ENCODE measurements at regions of chr11 and their contacts with region 1.

Region 1: DNA sequence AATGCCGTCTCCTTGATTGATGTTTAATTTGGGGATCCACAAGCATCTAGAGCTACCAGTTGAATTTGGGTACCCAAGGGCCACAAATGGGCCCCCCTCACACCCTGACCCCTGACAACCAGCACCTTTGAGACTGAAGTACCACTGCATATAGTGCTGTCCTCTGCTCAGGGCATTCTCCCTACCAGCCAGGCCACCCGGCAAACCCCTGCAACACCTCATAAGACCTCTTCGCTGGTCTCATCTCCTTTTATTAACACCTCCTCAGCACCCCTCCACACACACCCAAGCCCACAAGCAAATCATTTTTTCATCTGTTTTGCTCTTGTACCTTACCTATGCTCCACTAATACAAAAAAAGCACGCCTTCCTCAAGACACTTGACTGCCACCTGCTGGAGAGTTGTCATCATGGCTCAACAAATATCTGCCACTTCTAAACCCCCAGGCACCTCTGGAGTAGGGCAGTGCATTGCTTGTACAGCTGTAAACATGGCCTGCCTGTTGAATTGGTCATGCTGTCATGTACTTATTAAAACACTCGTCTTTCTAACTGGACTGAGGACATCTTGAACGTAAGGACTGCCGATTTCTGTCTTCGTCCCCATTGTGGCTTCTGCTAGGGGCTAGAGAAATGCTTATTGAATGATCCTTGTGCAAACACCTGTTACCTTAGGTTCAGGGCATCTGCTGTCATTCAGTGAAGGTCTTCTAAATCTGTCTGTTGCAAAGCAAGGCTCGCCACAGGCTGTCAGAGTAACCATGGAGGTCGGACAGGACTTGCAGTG is 66.5 kb downstream of the BMAL1 start:
- DNase-seq: peak; percentile 74 to 80
- ATAC-seq: peak; percentile 44 to 68
- H3K4me3 ChIP-seq: no peak overlapping the region
- H3K27ac ChIP-seq: peak overlapping the region; percentile 39 to 98
- H3K4me1 ChIP-seq: peaks cover 48% of the 10 kb centered on the region
- CTCF ChIP-seq: peak; percentile 91
- EP300 ChIP-seq: no peak
- POLR2A ChIP-seq: no peak
- RAD21 ChIP-seq: peak; percentile 92 to 95

Region 2: GRCh38 chr11:13238879-13239514 is 105.1 kb before region 1 on chr11:
- CTCF ChIA-PET with region 1: interaction called, 12 read pairs
- POLR2A ChIA-PET with region 1: no interaction called
- DNase-seq: peak; percentile 55 to 57
- ATAC-seq: peak; percentile 59 to 95; a peak in 4 of 6 replicates
- H3K4me3 ChIP-seq: no peak overlapping the region
- H3K27ac ChIP-seq: peak overlapping the region in 1 of 2 experiments; percentile 14; a peak in 3 of 6 replicates
- H3K4me1 ChIP-seq: 0 out of 3 replicates have a peak, but pooled peaks cover 2% of the 10 kb centered on the region
- CTCF ChIP-seq: peak; percentile 77
- EP300 ChIP-seq: no peak
- POLR2A ChIP-seq: no peak
- RAD21 ChIP-seq: peak; percentile 71 to 78

Region 3: GRCh38 chr11:13261591-13262061 is 82.5 kb before region 1 on chr11:
- CTCF ChIA-PET with region 1: interaction called, 11 read pairs
- POLR2A ChIA-PET with region 1: no interaction called
- DNase-seq: peak; percentile 69 to 84
- ATAC-seq: peak; percentile 78 to 95
- H3K4me3 ChIP-seq: no peak overlapping the region
- H3K27ac ChIP-seq: peak overlapping the region; percentile 62 to 84
- H3K4me1 ChIP-seq: peaks cover 30% of the 10 kb centered on the region
- CTCF ChIP-seq: no peak
- EP300 ChIP-seq: no peak
- POLR2A ChIP-seq: no peak
- RAD21 ChIP-seq: no peak

Region 4: DNA sequence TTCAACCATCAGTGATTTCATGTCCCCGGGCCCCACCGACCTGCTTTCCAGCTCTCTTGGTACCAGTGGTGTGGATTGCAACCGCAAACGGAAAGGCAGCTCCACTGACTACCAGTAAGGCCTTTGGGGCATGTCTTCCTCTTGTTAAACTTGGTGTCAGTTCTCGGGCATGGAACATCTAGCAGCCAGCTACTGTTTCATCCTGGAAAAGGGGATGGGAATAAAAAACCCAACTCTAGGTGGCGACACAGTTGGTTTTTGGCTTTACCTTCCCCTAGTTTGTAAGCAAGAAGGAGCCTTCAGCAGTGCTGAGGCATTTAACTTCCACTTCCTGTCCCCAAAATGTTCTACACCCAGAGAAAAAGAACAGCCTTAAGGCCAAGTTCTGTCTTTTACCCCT is 10.2 kb after region 1 on chr11:
- CTCF ChIA-PET with region 1: interaction called, 31 read pairs
- POLR2A ChIA-PET with region 1: no interaction called
- DNase-seq: peak in 1 of 2 experiments; percentile 31
- ATAC-seq: peak in 1 of 2 experiments; percentile 70; a peak in 4 of 6 replicates
- H3K4me3 ChIP-seq: no peak overlapping the region
- H3K27ac ChIP-seq: no peak overlapping the region
- H3K4me1 ChIP-seq: no peaks in the 10 kb centered on the region
- CTCF ChIP-seq: peak; percentile 21; the same call in 2 of the 3 replicates
- EP300 ChIP-seq: no peak
- POLR2A ChIP-seq: no peak
- RAD21 ChIP-seq: peak in 1 of 2 experiments; percentile 37; a peak in 1 of 5 replicates

Region 5: GRCh38 chr11:13384908-13385640 is 41.0 kb after region 1 on chr11:
- CTCF ChIA-PET with region 1: interaction called, 33 read pairs
- POLR2A ChIA-PET with region 1: no interaction called
- DNase-seq: peak; percentile 46 to 52
- ATAC-seq: peak; percentile 68 to 82; a peak in 5 of 6 replicates
- H3K4me3 ChIP-seq: no peak overlapping the region
- H3K27ac ChIP-seq: no peak overlapping the region
- H3K4me1 ChIP-seq: no peaks in the 10 kb centered on the region
- CTCF ChIP-seq: peak; percentile 82
- EP300 ChIP-seq: no peak
- POLR2A ChIP-seq: no peak
- RAD21 ChIP-seq: peak; percentile 67 to 69

Measured in A549 (cell line).